Activated CD4-positive, alpha-beta memory T cell treated with anti-CD3 and anti-CD28 coated beads, Interleukin-2, amount 10 ng/mL, durations not matched to agents 7 days and 5 days (primary cell): ENCODE measurements at regions of chr17 and their contacts with region 1.

Region 1: GRCh38 chr17:56819431-56820145 is 14.1 kb downstream of the C17orf67 start:
- DNase-seq: peak; percentile 74
- H3K4me3 Mint-ChIP-seq: no peak overlapping the region
- H3K27ac Mint-ChIP-seq: no peak overlapping the region
- H3K4me1 Mint-ChIP-seq: peaks cover 11% of the 10 kb centered on the region
- H3K27me3 Mint-ChIP-seq: no peaks in the 10 kb centered on the region

Region 2: GRCh38 chr17:56939901-56940343 is 120.3 kb after region 1 on chr17:
- CTCF ChIA-PET with region 1: interaction called, 91 read pairs
- POLR2A ChIA-PET with region 1: no interaction called
- DNase-seq: no peak
- H3K4me3 Mint-ChIP-seq: no peak overlapping the region
- H3K27ac Mint-ChIP-seq: no peak overlapping the region
- H3K4me1 Mint-ChIP-seq: peaks cover 26% of the 10 kb centered on the region
- H3K27me3 Mint-ChIP-seq: no peaks in the 10 kb centered on the region

Region 3: DNA sequence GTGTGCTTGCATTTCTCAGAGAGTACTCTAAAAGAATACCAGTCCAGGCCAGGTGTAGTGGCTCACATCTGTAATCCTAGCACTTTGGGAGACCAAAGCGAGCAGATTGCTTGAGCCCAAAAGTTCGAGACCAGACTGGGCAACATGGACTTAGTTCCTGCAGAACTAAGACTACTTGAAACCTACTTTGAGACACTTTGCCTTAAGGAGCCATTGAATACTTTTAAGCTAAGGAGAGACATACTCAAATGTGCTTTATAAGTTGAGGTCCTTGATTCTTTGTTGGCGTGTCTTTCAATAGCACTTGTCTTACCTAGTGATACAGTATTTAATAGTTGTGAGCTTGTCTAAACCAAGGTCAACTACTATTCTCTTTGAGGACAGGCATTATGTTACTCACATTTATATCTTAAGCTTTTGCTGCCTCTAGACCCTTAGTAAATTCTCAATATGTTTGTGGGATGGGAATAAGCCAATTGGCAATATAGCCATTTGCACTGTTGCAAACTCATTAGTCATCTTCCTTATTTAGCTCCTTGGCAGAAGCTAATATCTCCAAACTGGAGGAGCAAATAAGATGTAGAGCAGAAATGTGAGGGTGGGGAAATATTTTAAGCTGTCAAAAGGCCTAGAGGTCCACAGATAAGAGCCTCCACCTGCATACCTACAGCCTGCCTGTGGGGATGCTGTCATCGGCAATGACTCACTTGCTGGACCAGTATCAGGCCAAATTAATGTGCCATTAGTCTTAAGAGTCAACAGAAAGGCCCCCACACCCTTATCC is 174.6 kb after region 1 on chr17:
- CTCF ChIA-PET with region 1: no interaction called
- POLR2A ChIA-PET with region 1: no interaction called
- DNase-seq: no peak
- H3K4me3 Mint-ChIP-seq: no peak overlapping the region
- H3K27ac Mint-ChIP-seq: no peak overlapping the region
- H3K4me1 Mint-ChIP-seq: no peaks in the 10 kb centered on the region
- H3K27me3 Mint-ChIP-seq: no peaks in the 10 kb centered on the region